ENCODE measurements at regions of chr1 and their contacts with region 1.

Region 1: DNA sequence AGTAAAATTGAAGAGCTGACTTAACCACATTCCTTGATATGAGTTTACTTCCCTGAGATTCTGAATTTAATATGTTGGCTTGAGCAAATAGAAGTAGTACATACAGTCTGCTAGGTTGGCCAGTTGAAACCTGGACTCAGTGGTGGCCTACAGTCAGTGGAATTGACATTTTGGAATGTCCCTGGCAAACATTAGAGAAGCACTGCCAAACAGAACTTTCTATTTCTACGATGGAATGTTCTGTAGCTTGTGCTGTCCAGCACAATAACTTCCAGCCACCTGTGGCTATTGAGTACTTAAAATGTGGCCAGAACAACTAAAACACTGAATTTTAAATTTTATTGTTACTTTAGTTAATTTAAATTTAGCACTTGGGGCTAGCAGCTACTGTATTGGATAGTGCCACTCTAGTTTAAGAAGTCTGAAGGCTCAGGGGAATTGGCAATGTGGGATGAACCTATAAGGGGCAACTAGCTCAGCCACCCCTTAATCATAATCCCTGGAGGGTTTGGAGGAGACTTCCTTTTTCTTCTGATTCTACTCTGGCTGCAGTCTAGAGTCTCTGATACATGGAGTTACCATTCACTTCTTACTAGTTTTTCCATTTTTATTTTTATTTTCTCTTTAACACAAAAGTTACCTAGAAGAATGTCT is 10.3 kb upstream of the TEDDM1 start:
- DNase-seq: no peak
- H3K4me3 ChIP-seq: no peak overlapping the region
- H3K27ac ChIP-seq: no peak overlapping the region
- H3K27me3 ChIP-seq: peaks cover 10% of the 10 kb centered on the region
- CTCF ChIP-seq: no peak

Region 2: GRCh38 chr1:182149411-182149965 is 261.3 kb before region 1 on chr1:
- CTCF ChIA-PET with region 1: interaction called, 10 read pairs
- POLR2A ChIA-PET with region 1: no interaction called
- DNase-seq: no peak
- H3K4me3 ChIP-seq: no peak overlapping the region
- H3K27ac ChIP-seq: no peak overlapping the region
- H3K27me3 ChIP-seq: peaks cover 3% of the 10 kb centered on the region
- CTCF ChIP-seq: no peak